Dendritic cell treated with granulocyte-macrophage colony-stimulating factor and Interleukin-4, amounts not matched to agents 40 ng/mL and 50 ng/mL, for 4 days (primary cell): ENCODE measurements at regions of chr2 and their contacts with region 1.

Region 1: DNA sequence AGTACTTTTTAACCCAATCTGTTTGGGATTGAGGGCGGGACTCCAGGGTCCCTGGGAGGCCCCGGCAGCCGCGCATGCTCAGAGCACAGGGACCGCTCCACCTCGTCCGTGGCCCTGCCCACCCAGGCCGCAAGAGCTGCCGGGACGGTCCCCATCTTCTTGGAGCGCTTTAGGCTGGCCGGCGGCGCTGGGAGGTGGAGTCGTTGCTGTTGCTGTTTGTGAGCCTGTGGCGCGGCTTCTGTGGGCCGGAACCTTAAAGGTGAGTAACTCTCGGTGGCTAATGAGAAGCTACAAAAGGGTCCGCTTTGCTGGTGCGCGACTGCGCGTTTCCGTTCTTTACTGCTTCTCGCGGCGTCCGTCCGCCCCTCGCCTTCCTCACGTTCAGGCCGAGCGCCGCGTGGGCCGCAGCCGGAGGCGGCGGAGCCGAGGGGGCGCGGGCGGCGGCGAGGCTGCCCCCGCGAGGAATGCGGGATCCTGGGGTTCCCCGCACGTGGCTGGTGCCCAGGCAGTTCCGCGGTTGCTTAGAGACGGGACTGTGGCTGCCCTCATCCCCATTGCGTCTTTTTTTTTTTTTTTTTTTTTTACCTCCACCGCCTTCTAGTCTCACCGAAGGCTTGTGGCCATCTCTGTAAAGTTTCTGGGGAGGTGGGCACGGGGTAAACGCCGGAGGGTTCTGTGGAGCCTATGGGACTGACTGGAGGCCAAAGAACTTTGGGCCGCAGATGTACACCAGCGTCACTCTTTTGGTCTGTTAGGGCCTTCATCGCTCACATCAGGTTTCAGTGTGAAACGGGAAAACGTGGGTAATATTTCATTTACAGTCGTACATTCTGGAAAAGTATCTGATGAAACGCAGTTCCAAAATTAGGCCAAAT is at the start of gene SSB:
- H3K4me3 Mint-ChIP-seq: peak within 1 kb of the TSS; percentile 80
- H3K27ac Mint-ChIP-seq: peak within 1 kb of the TSS; percentile 77
- H3K4me1 Mint-ChIP-seq: peaks cover 6% of the 10 kb centered on the region
- H3K27me3 Mint-ChIP-seq: peaks cover 8% of the 10 kb centered on the region

Region 2: DNA sequence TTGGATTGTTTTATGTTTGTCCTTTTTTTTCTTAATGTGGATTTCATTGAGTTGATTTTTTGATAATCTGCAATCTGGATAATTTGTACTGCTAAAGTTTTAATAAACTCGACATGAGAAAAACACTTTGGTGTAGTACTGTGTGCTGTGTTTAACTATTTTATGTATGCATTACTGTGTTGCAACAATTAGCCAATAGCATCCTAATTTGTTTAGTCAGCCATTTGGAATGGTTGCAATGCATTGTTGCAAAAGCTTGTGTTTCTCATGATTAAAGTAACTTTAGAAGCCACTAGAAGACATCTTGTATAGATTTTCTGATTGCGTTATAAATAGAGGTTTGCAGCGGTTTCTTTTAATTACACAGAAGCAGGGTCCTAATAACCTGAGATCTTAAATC is 161.3 kb before region 1 on chr2:
- intact Hi-C with region 1: no loop called
- H3K4me3 Mint-ChIP-seq: no peak overlapping the region
- H3K27ac Mint-ChIP-seq: no peak overlapping the region
- H3K4me1 Mint-ChIP-seq: no peaks in the 10 kb centered on the region
- H3K27me3 Mint-ChIP-seq: no peaks in the 10 kb centered on the region

Region 3: DNA sequence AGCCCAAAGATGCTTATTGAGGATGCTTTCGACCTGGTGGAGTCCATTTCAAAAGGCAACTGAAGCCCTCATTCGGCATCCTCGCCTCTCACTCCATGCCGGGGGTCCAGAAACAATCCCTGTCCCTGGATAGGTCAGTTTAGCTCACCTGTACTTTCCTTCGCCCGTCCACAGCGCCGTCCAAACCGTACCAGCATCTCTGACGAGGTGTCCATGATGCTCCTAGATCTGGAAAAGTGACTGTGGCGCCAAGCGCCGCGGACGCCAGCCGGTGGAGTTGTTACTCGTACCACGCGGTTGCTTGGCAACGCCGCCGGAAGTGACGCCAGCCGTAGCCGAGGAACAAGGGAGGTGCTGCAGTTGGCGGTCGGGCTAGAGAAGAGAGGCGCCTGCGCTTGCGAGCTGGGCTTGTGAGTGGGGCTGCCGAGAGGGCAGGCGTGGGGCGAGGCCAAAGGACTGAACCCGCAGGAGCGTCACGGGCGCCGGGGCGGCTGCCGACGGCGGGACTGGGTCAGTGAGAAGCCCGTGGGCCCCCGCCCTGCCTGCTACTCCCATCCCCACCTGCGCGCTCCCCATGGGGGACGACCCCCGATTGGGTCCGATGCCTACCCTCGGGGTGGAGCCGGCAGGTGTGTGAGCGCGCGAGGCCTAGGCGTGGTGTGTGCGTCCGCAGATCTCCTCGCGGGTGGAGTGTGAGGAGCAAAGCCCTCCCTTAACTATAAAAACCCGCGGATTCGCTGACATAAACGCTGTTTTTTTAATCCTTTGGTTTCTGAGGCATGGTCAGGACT is 104.6 kb before region 1 on chr2 and contains the starts of genes CFAP210 and PHOSPHO2:
- intact Hi-C with region 1: loop called (anchors 2 kb)
- H3K4me3 Mint-ChIP-seq: peak within 1 kb of the TSS; percentile 79
- H3K27ac Mint-ChIP-seq: peak within 1 kb of the TSS; percentile 77
- H3K4me1 Mint-ChIP-seq: peaks cover 10% of the 10 kb centered on the region
- H3K27me3 Mint-ChIP-seq: peaks cover 9% of the 10 kb centered on the region

Region 4: DNA sequence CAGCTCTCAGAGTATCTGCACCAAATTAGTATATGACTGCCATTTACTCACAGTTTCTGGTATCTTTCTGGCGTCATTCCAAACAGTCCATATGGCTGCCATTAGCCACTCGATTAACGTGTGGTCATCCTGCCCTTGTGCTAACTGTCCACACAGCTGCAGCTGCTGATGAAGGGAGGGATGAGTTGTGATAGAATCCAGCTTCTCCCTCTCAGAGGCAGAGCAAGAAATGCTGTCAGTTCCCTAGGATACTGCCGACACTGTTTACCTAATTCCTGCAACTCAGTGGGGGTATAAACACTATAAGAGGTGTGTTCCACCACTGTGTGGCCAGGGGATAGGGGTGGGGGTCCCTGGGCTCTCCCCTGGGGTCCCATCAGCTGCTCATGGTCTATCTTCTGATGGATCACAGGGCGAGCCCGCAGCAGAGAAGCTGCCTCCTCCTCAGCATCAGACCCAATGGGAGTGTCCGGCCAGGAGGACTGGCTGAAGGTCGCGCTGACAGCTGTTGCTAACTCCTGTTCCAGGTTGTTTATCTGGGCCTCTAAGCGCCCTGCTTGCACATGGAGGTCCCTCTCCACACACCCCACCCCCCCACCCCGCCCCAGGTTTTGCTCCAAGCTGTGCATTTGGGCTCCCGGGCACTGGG is 82.6 kb before region 1 on chr2:
- intact Hi-C with region 1: no loop called
- H3K4me3 Mint-ChIP-seq: no peak overlapping the region
- H3K27ac Mint-ChIP-seq: no peak overlapping the region
- H3K4me1 Mint-ChIP-seq: no peaks in the 10 kb centered on the region
- H3K27me3 Mint-ChIP-seq: no peaks in the 10 kb centered on the region